ENCODE measurements at regions of chr18 and their contacts with region 1.

Region 1: GRCh38 chr18:12376718-12377555 is at the start of gene AFG3L2:
- DNase-seq: peak; percentile 90
- H3K4me3 ChIP-seq: peak within 1 kb of the TSS; percentile 79
- H3K27me3 ChIP-seq: no peaks in the 10 kb centered on the region
- CTCF ChIP-seq: no peak
- polyA plus RNA-seq, gene AFG3L2: 25.5 and 31.2 TPM in 2 replicates

Region 2: GRCh38 chr18:12694032-12694431 is 317.1 kb after region 1 on chr18:
- CTCF ChIA-PET with region 1: no interaction called
- POLR2A ChIA-PET with region 1: interaction called, 14 read pairs
- DNase-seq: no peak
- H3K4me3 ChIP-seq: no peak overlapping the region
- H3K27me3 ChIP-seq: no peaks in the 10 kb centered on the region
- CTCF ChIP-seq: no peak